RWPE1 (cell line): ENCODE measurements at regions of chr2 and their contacts with region 1.

Region 1: GRCh38 chr2:146681991-146682390 is 1162.8 kb upstream of the ACVR2A start:
- DNase-seq: no peak
- H3K27ac ChIP-seq: no peak overlapping the region
- CTCF ChIP-seq: no peak

Region 2: DNA sequence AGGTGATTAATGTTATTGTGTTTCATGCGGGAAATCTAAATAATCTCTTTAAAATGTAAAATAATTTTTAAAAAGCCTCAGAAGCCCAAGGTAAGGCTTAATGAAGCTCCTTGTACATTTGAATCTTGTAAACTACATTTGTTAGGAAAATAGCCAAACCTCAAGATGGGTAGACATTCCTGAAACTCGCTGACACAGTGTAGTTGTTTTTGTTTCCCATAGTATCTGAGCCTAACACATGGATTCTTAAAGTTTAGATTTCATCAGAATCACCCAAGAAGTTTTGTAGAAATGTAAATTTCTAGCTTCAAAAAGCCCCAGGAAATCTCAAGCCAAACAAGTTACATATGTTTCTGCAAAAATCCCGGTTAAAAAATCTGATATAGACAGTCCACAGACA is 58.2 kb before region 1 on chr2:
- CTCF ChIA-PET with region 1: no interaction called
- POLR2A ChIA-PET with region 1: no interaction called
- DNase-seq: no peak
- H3K27ac ChIP-seq: no peak overlapping the region
- CTCF ChIP-seq: no peak

Region 3: GRCh38 chr2:146721486-146721885 is 39.5 kb after region 1 on chr2:
- CTCF ChIA-PET with region 1: no interaction called
- POLR2A ChIA-PET with region 1: no interaction called
- DNase-seq: no peak
- H3K27ac ChIP-seq: no peak overlapping the region
- CTCF ChIP-seq: no peak

Region 4: GRCh38 chr2:146754606-146755005 is 72.6 kb after region 1 on chr2:
- CTCF ChIA-PET with region 1: interaction called, 10 read pairs
- POLR2A ChIA-PET with region 1: no interaction called
- DNase-seq: no peak
- H3K27ac ChIP-seq: no peak overlapping the region
- CTCF ChIP-seq: no peak